MCF 10A (cell line): ENCODE measurements at regions of chr7 and their contacts with region 1.

Region 1: GRCh38 chr7:142357953-142358520 is 100.2 kb upstream of the PRSS58 start:
- DNase-seq: peak; percentile 87
- H3K4me3 Mint-ChIP-seq: peak overlapping the region; percentile 38
- H3K27ac Mint-ChIP-seq: no peak overlapping the region
- H3K4me1 Mint-ChIP-seq: no peaks in the 10 kb centered on the region
- H3K27me3 Mint-ChIP-seq: peaks cover 28% of the 10 kb centered on the region
- CTCF ChIP-seq: peak; percentile 92

Region 2: GRCh38 chr7:142301923-142302550 is 56.0 kb before region 1 on chr7:
- CTCF ChIA-PET with region 1: interaction called, 11 read pairs
- POLR2A ChIA-PET with region 1: no interaction called
- intact Hi-C with region 1: no loop called
- DNase-seq: peak; percentile 36
- H3K4me3 Mint-ChIP-seq: no peak overlapping the region
- H3K27ac Mint-ChIP-seq: no peak overlapping the region
- H3K4me1 Mint-ChIP-seq: no peaks in the 10 kb centered on the region
- H3K27me3 Mint-ChIP-seq: peaks cover 50% of the 10 kb centered on the region
- CTCF ChIP-seq: peak; percentile 54

Region 3: DNA sequence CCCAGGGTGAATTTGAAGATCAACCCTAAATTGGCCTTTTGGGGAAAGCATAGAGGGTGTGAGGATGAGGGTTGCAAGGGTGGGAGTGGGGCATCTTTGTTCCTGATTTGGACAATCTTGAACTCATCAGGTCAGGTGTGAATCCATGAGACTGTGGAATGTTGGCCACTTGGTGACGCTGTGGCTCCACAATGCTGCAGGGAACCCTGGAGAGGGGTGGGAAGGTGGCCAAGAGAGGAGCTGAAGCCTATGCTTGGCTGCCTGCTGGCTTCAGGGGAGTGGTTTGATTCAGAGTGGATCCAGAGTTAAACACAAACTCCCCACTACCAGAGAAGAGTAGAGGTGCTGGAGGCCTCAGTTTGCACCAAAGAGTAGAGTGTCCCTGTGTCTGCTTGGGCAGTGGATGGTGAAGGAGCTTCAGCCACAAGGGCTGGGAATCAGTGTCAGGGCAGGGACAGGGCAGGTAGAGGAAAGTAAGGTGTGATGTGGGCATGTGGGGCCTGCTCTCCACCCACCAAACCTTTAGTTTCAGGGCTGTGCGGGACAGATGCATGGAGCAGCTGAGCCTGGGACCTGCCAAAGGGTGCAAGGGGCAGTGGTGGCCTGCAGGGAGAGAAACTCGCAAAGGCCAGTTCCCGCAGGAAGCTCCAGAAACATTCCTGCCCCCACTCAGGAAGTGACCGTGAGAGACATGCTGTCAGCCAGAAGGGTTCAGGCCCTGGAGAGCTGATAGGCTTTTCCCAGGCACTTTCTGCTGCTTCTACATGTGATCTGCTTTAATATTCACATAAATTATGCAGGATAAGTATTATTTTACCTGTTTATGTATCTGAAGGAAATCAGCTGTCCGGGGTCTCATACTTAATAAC is 19.2 kb before region 1 on chr7:
- CTCF ChIA-PET with region 1: interaction called, 10 read pairs
- POLR2A ChIA-PET with region 1: no interaction called
- intact Hi-C with region 1: no loop called
- DNase-seq: peak; percentile 76
- H3K4me3 Mint-ChIP-seq: no peak overlapping the region
- H3K27ac Mint-ChIP-seq: no peak overlapping the region
- H3K4me1 Mint-ChIP-seq: no peaks in the 10 kb centered on the region
- H3K27me3 Mint-ChIP-seq: peaks cover 40% of the 10 kb centered on the region
- CTCF ChIP-seq: peak; percentile 18

Region 4: GRCh38 chr7:142345811-142346210 is 12.2 kb before region 1 on chr7:
- CTCF ChIA-PET with region 1: interaction called, 19 read pairs
- POLR2A ChIA-PET with region 1: no interaction called
- intact Hi-C with region 1: no loop called
- DNase-seq: no peak
- H3K4me3 Mint-ChIP-seq: no peak overlapping the region
- H3K27ac Mint-ChIP-seq: no peak overlapping the region
- H3K4me1 Mint-ChIP-seq: no peaks in the 10 kb centered on the region
- H3K27me3 Mint-ChIP-seq: peaks cover 25% of the 10 kb centered on the region
- CTCF ChIP-seq: no peak

Region 5: DNA sequence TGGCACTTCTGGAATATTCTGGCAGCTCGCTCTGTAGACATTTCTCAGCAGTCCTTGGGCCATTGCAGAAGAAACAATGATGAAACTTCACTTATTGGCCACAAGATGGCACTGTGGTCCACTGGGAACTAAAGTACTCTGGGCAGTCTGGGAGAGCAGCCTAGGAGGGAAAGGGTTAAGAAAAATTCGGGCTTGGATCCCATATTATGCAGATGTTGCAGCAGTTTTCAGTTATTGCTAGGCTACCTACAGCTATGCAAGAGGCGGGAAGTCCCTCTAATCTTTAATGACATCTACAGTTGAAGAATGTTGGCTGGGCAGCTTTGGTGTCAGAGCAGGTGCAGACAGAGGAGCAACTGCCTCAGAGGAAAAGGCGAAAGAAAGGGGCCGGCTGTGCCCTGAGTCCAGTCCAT is 101.5 kb after region 1 on chr7:
- CTCF ChIA-PET with region 1: interaction called, 27 read pairs
- POLR2A ChIA-PET with region 1: no interaction called
- intact Hi-C with region 1: no loop called
- DNase-seq: peak; percentile 82
- H3K4me3 Mint-ChIP-seq: no peak overlapping the region
- H3K27ac Mint-ChIP-seq: no peak overlapping the region
- H3K4me1 Mint-ChIP-seq: peaks cover 10% of the 10 kb centered on the region
- H3K27me3 Mint-ChIP-seq: peaks cover 42% of the 10 kb centered on the region
- CTCF ChIP-seq: peak; percentile 65

Region 6: DNA sequence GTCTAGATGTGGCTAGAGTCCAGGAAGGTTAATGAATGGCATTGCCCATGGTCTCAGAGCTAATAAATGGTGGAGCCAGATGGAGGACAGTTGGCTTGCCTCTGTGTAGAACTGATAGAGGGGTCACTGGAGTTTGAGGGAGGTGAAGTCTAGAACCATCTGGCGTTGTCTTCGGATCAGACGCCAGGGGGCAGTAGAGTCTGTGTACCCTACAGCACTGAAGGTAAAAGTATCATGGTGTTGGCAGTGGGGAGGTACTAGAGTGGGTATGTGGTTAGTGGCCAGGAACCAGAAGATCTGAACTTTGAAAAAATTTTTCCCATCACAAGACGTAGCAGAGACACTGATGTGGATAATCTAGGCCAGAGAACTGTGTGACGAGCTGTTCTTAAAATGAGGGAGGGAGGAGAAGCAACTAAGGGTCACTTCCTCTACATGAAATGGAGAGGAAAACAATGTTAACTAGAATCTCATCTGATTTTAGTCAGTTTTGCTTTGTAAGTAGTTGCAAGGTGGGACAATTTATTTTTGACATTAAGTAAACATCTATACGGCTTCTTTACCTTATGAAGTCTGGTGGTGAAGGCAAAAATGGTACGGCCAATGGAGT is 127.7 kb after region 1 on chr7:
- CTCF ChIA-PET with region 1: interaction called, 34 read pairs
- POLR2A ChIA-PET with region 1: interaction called, 3 read pairs
- intact Hi-C with region 1: loop called (anchors 1 kb)
- DNase-seq: peak; percentile 43
- H3K4me3 Mint-ChIP-seq: no peak overlapping the region
- H3K27ac Mint-ChIP-seq: no peak overlapping the region
- H3K4me1 Mint-ChIP-seq: peaks cover 5% of the 10 kb centered on the region
- H3K27me3 Mint-ChIP-seq: peaks cover 25% of the 10 kb centered on the region
- CTCF ChIP-seq: peak; percentile 59

Region 7: DNA sequence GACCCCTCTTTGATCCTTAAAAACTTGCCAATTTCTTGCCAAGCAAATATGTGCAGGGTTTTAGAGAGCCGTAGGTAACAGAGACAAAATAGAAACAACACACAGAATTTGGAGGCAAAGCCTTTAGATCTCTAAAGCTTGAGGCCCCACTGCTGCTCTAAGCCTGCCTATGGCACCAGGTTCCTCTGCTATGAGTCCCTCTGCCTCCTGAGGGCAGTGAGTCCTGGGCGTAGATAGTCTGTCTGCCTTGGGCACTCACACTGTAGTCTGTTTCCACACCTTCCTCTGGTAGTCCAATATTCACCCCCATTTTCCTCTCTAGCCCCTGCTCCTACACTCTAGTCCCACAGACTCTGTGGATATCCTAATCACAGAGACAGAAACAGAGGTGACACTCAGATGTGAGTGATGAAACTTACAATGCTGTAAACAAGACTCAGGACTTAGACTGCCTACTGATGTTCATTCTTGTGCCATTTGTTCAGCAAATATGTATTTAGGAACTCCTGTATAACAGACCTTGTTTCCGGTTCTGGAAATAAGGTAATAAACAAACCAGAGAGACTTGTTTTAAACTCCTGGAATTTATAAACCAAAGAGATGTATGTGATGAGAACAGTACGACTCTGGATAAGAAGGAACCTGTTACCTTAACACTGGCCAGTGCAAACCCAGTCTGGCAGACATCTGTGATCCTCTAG is 237.9 kb after region 1 on chr7:
- CTCF ChIA-PET with region 1: no interaction called
- POLR2A ChIA-PET with region 1: no interaction called
- intact Hi-C with region 1: no loop called
- DNase-seq: no peak
- H3K4me3 Mint-ChIP-seq: no peak overlapping the region
- H3K27ac Mint-ChIP-seq: no peak overlapping the region
- H3K4me1 Mint-ChIP-seq: no peaks in the 10 kb centered on the region
- H3K27me3 Mint-ChIP-seq: no peaks in the 10 kb centered on the region
- CTCF ChIP-seq: no peak